PC-9 (cell line): ENCODE measurements at regions of chr3 and their contacts with region 1.

Region 1: DNA sequence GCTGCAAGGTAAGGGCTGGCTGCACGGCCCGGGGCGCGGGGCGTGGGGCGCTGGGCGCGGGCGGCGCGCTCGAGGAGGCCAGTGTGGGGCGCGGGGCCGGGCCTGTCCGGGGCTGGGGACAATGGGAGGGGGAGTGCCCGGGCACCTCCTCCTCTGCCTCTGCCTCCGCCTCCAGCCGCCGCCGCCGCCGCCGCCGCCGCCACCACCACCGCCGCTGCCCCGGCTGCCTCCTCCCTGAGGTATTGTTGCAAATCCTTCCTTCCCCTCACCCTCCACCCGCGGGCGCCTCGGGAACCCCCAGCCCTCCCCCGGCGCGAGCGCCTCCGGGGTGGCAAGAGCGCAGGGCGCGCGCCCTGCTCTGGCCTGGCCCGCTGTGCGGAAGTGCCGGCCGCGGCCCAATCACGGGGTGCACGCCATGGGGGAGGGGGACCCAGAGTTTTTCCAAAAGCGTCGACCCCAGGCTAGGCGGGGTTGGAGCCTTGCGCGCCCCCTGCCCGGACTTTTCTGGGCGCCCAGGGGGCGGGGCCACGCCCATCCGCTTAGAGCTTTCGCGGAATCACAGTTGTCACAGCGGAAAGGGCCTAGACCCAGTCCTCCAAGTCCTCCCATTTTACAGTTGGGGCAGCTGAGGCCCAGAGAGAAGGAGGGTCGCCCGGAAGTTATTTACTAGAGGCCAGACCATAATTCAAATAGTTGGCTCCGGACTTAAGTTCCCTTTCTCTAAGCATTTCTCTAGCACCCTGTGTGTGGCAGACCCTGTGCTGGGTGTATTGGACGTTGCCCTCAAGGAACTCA is at the start of gene LPP:
- DNase-seq: peak; percentile 63 to 95
- H3K4me3 ChIP-seq: peak within 1 kb of the TSS; percentile 81
- H3K27ac ChIP-seq: peak within 1 kb of the TSS; percentile 78
- H3K4me1 ChIP-seq: peaks cover 49% of the 10 kb centered on the region
- H3K27me3 ChIP-seq: no peaks in the 10 kb centered on the region
- CTCF ChIP-seq: no peak
- total RNA-seq, gene LPP: 113 and 148 TPM in 2 replicates

Region 2: DNA sequence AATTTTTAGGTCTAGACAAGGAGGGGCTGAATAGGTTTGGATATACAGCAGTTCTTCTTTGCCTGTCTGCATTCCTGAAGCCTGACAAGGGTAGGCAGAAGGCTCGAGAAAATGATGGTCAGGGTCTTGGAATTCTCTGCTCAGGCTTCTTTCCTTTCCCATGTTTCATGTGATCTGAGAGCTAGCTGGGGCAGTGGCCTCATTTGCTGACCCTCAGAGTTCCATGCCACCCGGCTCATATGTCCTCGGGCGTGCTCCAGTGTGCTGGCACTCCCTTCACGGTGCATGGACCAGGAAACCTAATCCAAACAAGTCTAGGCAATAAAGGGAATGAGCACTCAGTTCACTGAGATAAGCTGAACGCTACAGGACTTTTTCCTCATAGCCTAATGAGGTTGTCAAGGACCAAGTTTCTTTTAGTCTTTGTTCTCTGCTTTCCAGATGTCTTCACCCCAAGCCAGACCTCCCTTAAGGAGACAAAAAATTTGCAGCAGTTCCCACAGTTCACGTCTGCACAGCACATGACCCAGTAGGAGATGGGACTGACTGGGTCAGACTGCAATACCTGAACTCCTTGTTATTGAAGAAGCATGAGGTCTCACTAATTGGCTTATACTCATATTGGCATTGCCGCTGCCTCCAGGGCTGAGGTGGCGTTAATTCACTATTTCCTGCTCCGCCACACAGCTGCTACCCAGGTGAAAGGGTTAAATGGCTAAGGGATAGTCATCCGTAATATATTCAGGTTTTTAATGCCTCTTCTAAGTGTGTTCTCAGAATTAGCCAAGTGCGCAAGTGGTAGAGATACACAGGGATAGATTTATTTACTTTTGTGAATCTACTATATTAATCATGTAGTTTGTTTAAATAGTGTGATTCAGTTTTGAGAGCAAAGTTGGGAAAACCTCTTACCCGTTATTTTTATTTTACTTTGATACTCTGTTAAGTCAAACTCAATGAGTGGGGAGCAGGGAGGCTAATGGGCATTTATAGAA is 801.3 kb before region 1 on chr3:
- CTCF ChIA-PET with region 1: no interaction called
- POLR2A ChIA-PET with region 1: no interaction called
- intact Hi-C with region 1: no loop called
- DNase-seq: no peak
- H3K4me3 ChIP-seq: no peak overlapping the region
- H3K27ac ChIP-seq: no peak overlapping the region
- H3K4me1 ChIP-seq: no peaks in the 10 kb centered on the region
- H3K27me3 ChIP-seq: peaks cover 14% of the 10 kb centered on the region; the same call in 1 of the 2 replicates
- CTCF ChIP-seq: no peak

Region 3: DNA sequence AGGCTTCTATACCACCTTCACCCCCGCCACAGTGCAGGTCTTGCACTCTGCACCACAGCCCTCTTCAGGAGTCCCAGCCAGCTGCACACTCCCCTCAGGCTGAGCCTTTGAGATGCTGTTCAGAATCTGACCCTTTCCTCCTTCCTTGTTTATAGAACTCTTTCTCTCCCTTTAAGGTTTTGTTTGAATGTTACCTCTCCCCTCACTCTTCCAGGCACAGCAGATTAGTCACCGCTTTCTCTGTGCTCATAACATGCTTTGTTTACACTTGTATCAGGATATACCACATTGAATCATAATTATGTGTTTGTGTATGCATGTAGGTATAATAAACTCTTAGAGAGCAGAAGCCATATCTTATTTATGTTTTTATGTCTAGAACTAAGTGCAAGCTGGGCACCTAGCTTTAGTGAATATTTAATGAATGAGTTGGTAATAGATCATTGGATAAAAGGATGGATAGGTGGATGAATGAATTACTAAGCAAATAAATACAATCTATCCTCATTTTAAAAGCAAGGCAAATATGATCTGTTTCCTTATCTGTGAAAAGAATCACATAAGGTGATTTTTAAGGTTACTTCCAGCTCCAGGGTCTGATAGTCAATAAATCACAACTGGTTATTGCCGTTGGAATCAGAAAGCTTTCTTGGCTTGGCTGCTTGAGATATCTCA is 240.5 kb before region 1 on chr3:
- CTCF ChIA-PET with region 1: no interaction called
- POLR2A ChIA-PET with region 1: no interaction called
- intact Hi-C with region 1: loop called (anchors 1 kb)
- DNase-seq: peak; percentile 64 to 100
- H3K4me3 ChIP-seq: peak overlapping the region; percentile 15; the same call in 1 of the 2 replicates
- H3K27ac ChIP-seq: peak overlapping the region; percentile 94
- H3K4me1 ChIP-seq: peaks cover 85% of the 10 kb centered on the region
- H3K27me3 ChIP-seq: no peaks in the 10 kb centered on the region
- CTCF ChIP-seq: no peak

Region 4: DNA sequence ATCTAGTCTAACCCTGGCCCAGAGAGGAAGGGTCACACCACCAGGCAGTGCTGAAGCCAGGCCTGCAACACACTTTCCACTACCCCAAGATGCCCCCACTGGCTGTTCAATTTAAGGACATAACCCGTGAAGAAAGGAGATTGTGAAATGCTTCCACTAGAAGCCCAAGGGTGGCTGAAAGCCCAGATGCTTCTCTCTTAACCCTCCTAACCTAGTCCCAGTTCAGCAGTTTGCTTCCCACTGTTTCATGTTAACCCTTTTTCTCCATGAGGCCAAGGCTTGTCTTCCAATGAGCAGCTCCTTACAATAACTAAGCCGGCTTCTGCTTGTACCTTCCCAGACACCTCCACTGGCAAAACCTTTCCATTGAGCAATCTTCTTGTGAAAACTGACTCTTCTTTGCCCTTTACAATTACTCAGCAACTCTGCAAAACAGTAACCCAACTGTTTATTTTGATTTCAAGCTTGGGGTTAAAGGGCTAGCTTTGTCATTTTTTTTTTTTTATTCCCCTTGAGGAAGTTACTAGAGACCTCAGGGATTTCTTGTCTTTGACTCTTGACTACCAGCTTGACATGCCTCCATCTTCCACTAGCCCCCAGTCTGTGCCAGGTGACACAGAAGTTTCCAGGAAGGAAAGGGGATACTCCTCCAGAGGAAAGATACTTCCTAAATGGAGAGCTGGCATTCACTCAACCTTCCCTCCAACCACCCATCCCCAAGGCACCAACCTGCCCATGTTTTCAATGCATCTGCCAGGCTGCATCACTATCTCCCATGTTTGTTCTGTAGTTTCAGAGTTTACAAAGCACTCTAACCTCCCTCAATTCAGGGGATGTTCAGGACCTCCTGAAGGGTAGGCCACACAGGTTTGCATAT is 198.9 kb before region 1 on chr3:
- CTCF ChIA-PET with region 1: interaction called, 3 read pairs
- POLR2A ChIA-PET with region 1: interaction called, 6 read pairs
- intact Hi-C with region 1: loop called (anchors 5 kb)
- DNase-seq: peak; percentile 53 to 98
- H3K4me3 ChIP-seq: peak overlapping the region; percentile 23
- H3K27ac ChIP-seq: peak overlapping the region; percentile 90
- H3K4me1 ChIP-seq: peaks cover 71% of the 10 kb centered on the region
- H3K27me3 ChIP-seq: no peaks in the 10 kb centered on the region
- CTCF ChIP-seq: no peak

Region 5: DNA sequence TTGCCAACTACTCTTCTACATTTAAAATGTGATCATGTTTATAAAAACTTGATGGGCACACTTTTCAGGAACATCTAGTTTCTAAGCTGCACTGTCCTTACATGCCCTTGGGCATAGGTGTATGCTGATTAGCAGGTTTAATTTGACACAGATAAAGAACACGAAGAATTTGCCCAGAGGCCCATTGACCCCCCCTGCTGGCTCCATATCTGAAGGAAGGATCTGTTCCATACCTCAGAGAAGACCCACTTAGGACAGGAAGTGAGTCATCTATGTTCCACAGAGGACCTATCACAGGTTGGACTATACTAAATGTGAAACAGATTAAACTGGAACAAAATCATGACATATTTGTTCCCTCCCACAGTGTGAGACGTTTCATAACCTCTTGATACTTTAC is 93.1 kb before region 1 on chr3:
- CTCF ChIA-PET with region 1: no interaction called
- POLR2A ChIA-PET with region 1: no interaction called
- intact Hi-C with region 1: loop called (anchors 1 kb)
- DNase-seq: peak; percentile 92 to 99
- H3K4me3 ChIP-seq: no peak overlapping the region
- H3K27ac ChIP-seq: peak overlapping the region; percentile 46
- H3K4me1 ChIP-seq: peaks cover 36% of the 10 kb centered on the region
- H3K27me3 ChIP-seq: no peaks in the 10 kb centered on the region
- CTCF ChIP-seq: no peak

Region 6: DNA sequence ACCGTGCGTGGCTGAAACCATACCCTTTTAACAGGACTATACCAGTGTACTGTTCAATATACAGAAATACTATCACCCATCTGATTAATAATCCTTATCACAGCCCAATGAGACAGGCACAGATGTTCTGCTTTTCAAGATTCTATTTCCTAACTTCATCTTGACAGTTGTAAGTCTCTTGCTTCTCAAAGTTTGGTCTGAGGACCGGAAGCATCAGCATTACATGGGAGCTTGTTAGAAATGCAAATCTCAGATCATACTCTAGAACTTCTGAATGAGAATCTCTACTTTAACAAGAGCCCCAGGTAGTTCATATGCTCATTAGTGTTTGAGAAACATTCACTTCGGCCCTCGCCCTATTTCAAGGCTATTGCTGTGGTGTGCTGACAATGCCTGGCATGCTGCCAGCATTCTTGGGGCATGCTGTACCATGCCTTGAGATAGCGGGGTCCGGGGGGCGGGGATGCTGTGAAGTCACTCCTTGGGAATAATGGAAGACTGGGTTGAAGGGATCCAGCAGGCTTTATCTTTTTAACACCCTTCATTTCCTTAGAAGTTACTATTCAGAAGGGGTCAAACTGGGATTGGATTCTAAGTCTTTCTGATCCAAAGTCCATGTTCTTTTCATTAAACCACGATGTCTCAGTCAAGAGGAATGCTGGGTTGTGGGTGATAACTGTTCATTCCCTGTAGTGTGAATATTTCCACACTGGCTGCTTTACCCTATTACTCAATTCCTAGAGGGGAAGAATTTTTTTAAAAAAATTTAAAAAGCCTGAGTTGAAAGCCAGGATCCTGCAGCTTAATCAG is 194.4 kb after region 1 on chr3:
- CTCF ChIA-PET with region 1: no interaction called
- POLR2A ChIA-PET with region 1: interaction called, 3 read pairs
- intact Hi-C with region 1: loop called (anchors 5 kb)
- DNase-seq: peak; percentile 69 to 85
- H3K4me3 ChIP-seq: no peak overlapping the region
- H3K27ac ChIP-seq: peak overlapping the region; percentile 37
- H3K4me1 ChIP-seq: peaks cover 17% of the 10 kb centered on the region
- H3K27me3 ChIP-seq: no peaks in the 10 kb centered on the region
- CTCF ChIP-seq: no peak

Region 7: GRCh38 chr3:188683032-188683521 is 528.9 kb after region 1 on chr3:
- CTCF ChIA-PET with region 1: no interaction called
- POLR2A ChIA-PET with region 1: no interaction called
- intact Hi-C with region 1: loop called (anchors 5 kb)
- DNase-seq: peak; percentile 39 to 64
- H3K4me3 ChIP-seq: no peak overlapping the region
- H3K27ac ChIP-seq: peak overlapping the region; percentile 11; the same call in 1 of the 2 replicates
- H3K4me1 ChIP-seq: peaks cover 38% of the 10 kb centered on the region
- H3K27me3 ChIP-seq: no peaks in the 10 kb centered on the region
- CTCF ChIP-seq: no peak

Region 8: DNA sequence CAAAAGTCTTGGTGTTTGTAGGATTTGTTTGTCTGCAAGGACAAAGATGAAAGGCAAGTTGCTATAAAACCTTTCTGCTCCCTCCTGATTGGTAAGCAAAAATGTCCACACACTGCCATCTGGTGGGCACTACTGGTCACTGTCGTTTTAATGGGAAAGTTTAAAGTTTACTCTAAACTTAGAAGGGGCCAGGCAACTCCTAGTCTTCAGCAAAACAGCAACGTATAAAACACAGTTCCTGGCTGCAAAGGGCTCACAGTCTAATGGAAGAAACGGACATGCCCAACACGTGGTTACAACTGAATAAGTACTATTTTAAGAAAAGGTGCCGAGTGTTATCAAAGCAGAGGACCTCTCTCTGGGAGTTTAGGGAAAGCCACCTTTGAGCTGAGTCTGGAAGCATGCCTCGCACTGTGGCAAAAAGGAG is 993.9 kb after region 1 on chr3:
- CTCF ChIA-PET with region 1: no interaction called
- POLR2A ChIA-PET with region 1: no interaction called
- intact Hi-C with region 1: loop called (anchors 10 kb)
- DNase-seq: peak; percentile 59
- H3K4me3 ChIP-seq: no peak overlapping the region
- H3K27ac ChIP-seq: no peak overlapping the region
- H3K4me1 ChIP-seq: peaks cover 7% of the 10 kb centered on the region
- H3K27me3 ChIP-seq: no peaks in the 10 kb centered on the region
- CTCF ChIP-seq: peak; percentile 97